PC-3 (cell line): ENCODE measurements at regions of chr9 and their contacts with region 1.

Region 1: DNA sequence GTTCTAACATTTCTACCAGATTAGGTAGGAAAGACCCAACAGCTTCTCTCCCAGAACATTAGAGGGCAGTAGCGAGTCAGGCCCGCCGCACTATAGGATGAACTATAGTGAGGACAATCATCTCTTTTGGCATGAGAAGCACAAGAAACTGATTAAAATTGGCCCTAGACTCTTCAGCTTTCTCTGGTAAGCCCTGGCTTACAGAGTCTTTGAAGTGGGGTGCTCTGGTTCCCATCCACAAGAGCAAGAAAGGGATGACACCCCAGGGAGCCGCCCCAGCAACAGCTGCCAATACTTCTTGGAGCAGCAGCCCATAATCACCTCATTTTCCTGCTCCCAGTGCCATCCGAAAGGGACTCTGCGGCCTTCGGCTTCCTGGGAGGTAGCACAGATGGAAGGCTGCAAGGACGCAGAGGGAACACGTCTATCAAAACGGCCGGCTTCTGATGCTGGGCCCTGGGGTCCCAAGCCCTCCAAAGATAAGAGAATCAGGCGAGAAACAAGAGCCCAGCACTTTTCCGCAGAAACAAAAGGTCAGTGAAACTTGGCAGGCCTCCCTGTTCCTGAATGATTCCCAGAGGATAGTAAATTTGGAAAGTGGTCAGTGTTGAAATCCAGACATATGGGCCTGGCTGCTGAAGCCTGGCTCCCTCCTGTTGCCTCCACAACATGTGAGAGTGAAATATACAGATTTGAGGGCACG is 69.3 kb downstream of the HSD17B3 start:
- DNase-seq: peak; percentile 61
- ATAC-seq: peak; percentile 90
- H3K4me3 ChIP-seq: no peak overlapping the region
- H3K27ac ChIP-seq: no peak overlapping the region
- H3K4me1 ChIP-seq: no peaks in the 10 kb centered on the region
- H3K27me3 ChIP-seq: no peaks in the 10 kb centered on the region
- CTCF ChIP-seq: peak; percentile 85

Region 2: GRCh38 chr9:96150324-96151227 is 82.1 kb before region 1 on chr9:
- CTCF ChIA-PET with region 1: no interaction called
- POLR2A ChIA-PET with region 1: no interaction called
- intact Hi-C with region 1: no loop called
- DNase-seq: no peak
- ATAC-seq: no peak
- H3K4me3 ChIP-seq: no peak overlapping the region
- H3K27ac ChIP-seq: no peak overlapping the region
- H3K4me1 ChIP-seq: no peaks in the 10 kb centered on the region
- H3K27me3 ChIP-seq: peaks cover 17% of the 10 kb centered on the region
- CTCF ChIP-seq: no peak

Region 3: GRCh38 chr9:96317335-96317980 is 84.8 kb after region 1 on chr9:
- CTCF ChIA-PET with region 1: interaction called, 8 read pairs
- POLR2A ChIA-PET with region 1: interaction called, 5 read pairs
- intact Hi-C with region 1: loop called (anchors 1 kb)
- DNase-seq: peak; percentile 65
- ATAC-seq: peak; percentile 50; the same call in 1 of the 2 replicates
- H3K4me3 ChIP-seq: no peak overlapping the region
- H3K27ac ChIP-seq: no peak overlapping the region
- H3K4me1 ChIP-seq: no peaks in the 10 kb centered on the region
- H3K27me3 ChIP-seq: no peaks in the 10 kb centered on the region
- CTCF ChIP-seq: peak; percentile 88

Region 4: GRCh38 chr9:96651626-96652025 is 418.9 kb after region 1 on chr9:
- CTCF ChIA-PET with region 1: no interaction called
- POLR2A ChIA-PET with region 1: no interaction called
- intact Hi-C with region 1: no loop called
- DNase-seq: peak; percentile 61
- ATAC-seq: no peak
- H3K4me3 ChIP-seq: no peak overlapping the region
- H3K27ac ChIP-seq: no peak overlapping the region
- H3K4me1 ChIP-seq: peaks cover 12% of the 10 kb centered on the region; the same call in 1 of the 2 replicates
- H3K27me3 ChIP-seq: no peaks in the 10 kb centered on the region
- CTCF ChIP-seq: peak; percentile 73

Region 5: DNA sequence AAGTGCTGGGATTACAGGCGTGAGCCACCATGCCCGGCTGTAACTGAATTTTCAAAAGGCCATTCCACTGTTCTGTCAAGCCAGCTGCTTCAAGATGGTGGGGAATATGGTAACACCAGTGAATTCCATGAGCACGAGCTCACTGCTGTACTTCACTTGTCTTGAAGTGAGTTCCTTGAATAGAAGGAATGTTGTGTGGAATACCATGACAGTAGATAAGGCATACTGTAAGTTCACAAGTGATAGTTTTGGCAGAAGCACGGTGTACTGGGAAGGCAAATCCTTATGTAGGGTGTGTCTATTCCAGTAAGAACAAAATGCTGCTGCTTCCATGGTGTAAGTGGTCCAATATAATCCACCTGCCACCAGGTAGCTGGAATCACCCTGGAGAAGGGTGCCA is 429.0 kb after region 1 on chr9:
- CTCF ChIA-PET with region 1: no interaction called
- POLR2A ChIA-PET with region 1: no interaction called
- intact Hi-C with region 1: loop called (anchors 10 kb)
- DNase-seq: no peak
- ATAC-seq: no peak
- H3K4me3 ChIP-seq: no peak overlapping the region
- H3K27ac ChIP-seq: no peak overlapping the region
- H3K4me1 ChIP-seq: 0 out of 2 replicates have a peak, but pooled peaks cover 4% of the 10 kb centered on the region
- H3K27me3 ChIP-seq: no peaks in the 10 kb centered on the region
- CTCF ChIP-seq: no peak

Region 6: GRCh38 chr9:96751815-96752214 is 519.1 kb after region 1 on chr9:
- CTCF ChIA-PET with region 1: no interaction called
- POLR2A ChIA-PET with region 1: no interaction called
- intact Hi-C with region 1: no loop called
- DNase-seq: no peak
- ATAC-seq: no peak
- H3K4me3 ChIP-seq: no peak overlapping the region
- H3K27ac ChIP-seq: no peak overlapping the region
- H3K4me1 ChIP-seq: no peaks in the 10 kb centered on the region
- H3K27me3 ChIP-seq: no peaks in the 10 kb centered on the region
- CTCF ChIP-seq: no peak